ENCODE measurements at regions of chr1 and their contacts with region 1.

Region 1: GRCh38 chr1:56113679-56114078 is 465.7 kb downstream of the PLPP3 start:
- DNase-seq: no peak
- H3K4me3 ChIP-seq: no peak overlapping the region
- H3K27ac ChIP-seq: no peak overlapping the region
- H3K4me1 ChIP-seq: no peaks in the 10 kb centered on the region
- H3K27me3 ChIP-seq: no peaks in the 10 kb centered on the region
- CTCF ChIP-seq: no peak
- POLR2A ChIP-seq: no peak

Region 2: GRCh38 chr1:56183151-56183550 is 69.5 kb after region 1 on chr1:
- CTCF ChIA-PET with region 1: no interaction called
- POLR2A ChIA-PET with region 1: no interaction called
- dilution Hi-C with region 1: no loop called
- intact Hi-C with region 1: loop called (anchors 2 kb)
- DNase-seq: no peak
- H3K4me3 ChIP-seq: no peak overlapping the region
- H3K27ac ChIP-seq: no peak overlapping the region
- H3K4me1 ChIP-seq: peaks cover 11% of the 10 kb centered on the region
- H3K27me3 ChIP-seq: no peaks in the 10 kb centered on the region
- CTCF ChIP-seq: no peak
- POLR2A ChIP-seq: no peak

Region 3: GRCh38 chr1:56484695-56485094 is 371.0 kb after region 1 on chr1:
- CTCF ChIA-PET with region 1: no interaction called
- POLR2A ChIA-PET with region 1: no interaction called
- dilution Hi-C with region 1: no loop called
- intact Hi-C with region 1: no loop called
- DNase-seq: no peak
- H3K4me3 ChIP-seq: no peak overlapping the region
- H3K27ac ChIP-seq: no peak overlapping the region
- H3K4me1 ChIP-seq: peaks cover 19% of the 10 kb centered on the region
- H3K27me3 ChIP-seq: no peaks in the 10 kb centered on the region
- CTCF ChIP-seq: no peak
- POLR2A ChIP-seq: no peak

Measured in endothelial cell of umbilical vein (primary cell).